CD8-positive, alpha-beta T cell (primary cell): ENCODE measurements at regions of chr19 and their contacts with region 1.

Region 1: DNA sequence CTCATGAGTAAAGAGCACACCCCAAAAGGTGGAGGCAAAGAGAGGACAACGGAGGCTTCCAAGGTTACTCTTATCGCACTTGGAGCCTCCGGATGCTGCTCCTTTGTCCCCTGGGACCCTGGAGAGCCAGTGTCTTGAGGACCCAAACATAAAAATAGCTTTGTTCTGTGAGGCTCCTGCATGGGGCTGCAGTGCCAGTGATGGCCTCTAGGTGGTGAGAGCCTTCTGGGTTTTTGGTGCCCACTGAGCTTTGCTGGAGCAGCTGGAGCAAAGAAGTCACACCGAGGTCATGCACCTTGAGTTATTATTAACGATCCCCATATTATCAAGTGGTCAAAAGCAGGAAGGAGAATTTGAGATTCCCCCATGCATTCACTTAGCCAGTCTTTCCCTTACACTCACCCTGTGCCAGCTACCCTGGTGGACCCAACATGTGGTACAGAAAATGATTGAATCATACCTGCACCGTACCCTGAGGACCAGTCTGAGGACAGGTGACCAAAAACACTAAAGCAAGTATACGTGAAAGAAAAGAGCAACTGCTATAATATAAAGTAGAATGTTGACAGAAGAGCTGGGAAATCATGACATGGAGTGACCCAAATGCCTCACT is 41.5 kb downstream of the ZNF682 start:
- DNase-seq: peak in 8 of 9 experiments; percentile 2 to 62 (median 37)
- ATAC-seq: peak; percentile 61
- H3K4me3 ChIP-seq: no peak overlapping the region
- H3K4me3 Mint-ChIP-seq: no peak overlapping the region
- H3K27ac ChIP-seq: no peak overlapping the region
- H3K27ac Mint-ChIP-seq: no peak overlapping the region
- H3K4me1 ChIP-seq: no peaks in the 10 kb centered on the region
- H3K4me1 Mint-ChIP-seq: no peaks in the 10 kb centered on the region
- H3K27me3 ChIP-seq: no peaks in the 10 kb centered on the region
- H3K27me3 Mint-ChIP-seq: no peaks in the 10 kb centered on the region
- CTCF ChIP-seq: peak; percentile 86

Region 2: DNA sequence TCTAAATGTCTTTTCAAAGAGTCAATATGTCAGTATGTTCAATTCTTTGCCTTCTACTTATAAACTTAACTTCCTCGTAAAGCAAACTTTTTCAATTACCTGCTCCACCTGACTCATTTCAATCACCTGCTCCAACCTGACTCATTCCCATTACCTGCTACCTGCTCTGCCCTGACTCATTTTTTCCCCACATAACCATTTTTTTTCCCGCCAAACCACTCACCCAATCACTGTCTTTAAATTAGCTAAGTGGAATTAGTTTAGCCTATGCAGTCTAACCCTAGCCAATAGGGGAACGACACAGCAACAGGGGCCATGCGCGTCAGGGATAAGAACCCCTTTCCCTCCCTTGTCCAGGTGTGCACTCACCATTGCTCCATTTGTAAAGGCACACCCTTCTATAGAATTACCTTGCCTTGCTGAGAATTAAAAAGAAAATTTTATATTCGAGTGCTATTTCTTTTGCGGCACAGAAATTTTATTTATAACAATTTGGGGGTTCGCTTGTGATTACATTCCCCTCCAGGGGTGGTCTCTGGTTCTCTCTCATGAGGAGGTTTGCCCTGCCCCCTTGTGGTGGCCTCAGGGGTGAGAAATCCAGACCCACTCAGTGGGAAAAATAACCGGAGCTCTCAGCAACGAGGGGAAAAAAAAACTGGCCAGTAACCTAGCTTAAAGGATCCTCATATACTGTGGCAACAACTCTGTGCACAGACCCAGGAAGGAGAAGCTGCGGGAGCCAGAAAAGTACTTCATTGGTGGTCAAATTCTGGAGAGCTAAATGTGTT is 362.4 kb after region 1 on chr19:
- CTCF ChIA-PET with region 1: interaction called, 5 read pairs
- POLR2A ChIA-PET with region 1: no interaction called
- intact Hi-C with region 1: loop called in 1 of 2 experiments (anchors 2 kb)
- DNase-seq: peak in 1 of 9 experiments; percentile 6
- ATAC-seq: no peak
- H3K4me3 ChIP-seq: no peak overlapping the region
- H3K4me3 Mint-ChIP-seq: no peak overlapping the region
- H3K27ac ChIP-seq: no peak overlapping the region
- H3K27ac Mint-ChIP-seq: no peak overlapping the region
- H3K4me1 ChIP-seq: no peaks in the 10 kb centered on the region
- H3K4me1 Mint-ChIP-seq: peaks cover 5% of the 10 kb centered on the region
- H3K27me3 ChIP-seq: no peaks in the 10 kb centered on the region
- H3K27me3 Mint-ChIP-seq: no peaks in the 10 kb centered on the region
- CTCF ChIP-seq: no peak

Region 3: GRCh38 chr19:20513179-20513934 is 515.6 kb after region 1 on chr19:
- CTCF ChIA-PET with region 1: interaction called, 3 read pairs
- POLR2A ChIA-PET with region 1: no interaction called
- intact Hi-C with region 1: loop called in 1 of 2 experiments (anchors 5 kb)
- DNase-seq: peak in 2 of 9 experiments; percentile 1 to 15
- ATAC-seq: no peak
- H3K4me3 ChIP-seq: no peak overlapping the region
- H3K4me3 Mint-ChIP-seq: no peak overlapping the region
- H3K27ac ChIP-seq: no peak overlapping the region
- H3K27ac Mint-ChIP-seq: no peak overlapping the region
- H3K4me1 ChIP-seq: no peaks in the 10 kb centered on the region
- H3K4me1 Mint-ChIP-seq: peaks cover 3% of the 10 kb centered on the region
- H3K27me3 ChIP-seq: no peaks in the 10 kb centered on the region
- H3K27me3 Mint-ChIP-seq: no peaks in the 10 kb centered on the region
- CTCF ChIP-seq: no peak